Cardiac septum (tissue), 1 donor: ENCODE measurements at regions of chr14 and their contacts with region 1.

Region 1: DNA sequence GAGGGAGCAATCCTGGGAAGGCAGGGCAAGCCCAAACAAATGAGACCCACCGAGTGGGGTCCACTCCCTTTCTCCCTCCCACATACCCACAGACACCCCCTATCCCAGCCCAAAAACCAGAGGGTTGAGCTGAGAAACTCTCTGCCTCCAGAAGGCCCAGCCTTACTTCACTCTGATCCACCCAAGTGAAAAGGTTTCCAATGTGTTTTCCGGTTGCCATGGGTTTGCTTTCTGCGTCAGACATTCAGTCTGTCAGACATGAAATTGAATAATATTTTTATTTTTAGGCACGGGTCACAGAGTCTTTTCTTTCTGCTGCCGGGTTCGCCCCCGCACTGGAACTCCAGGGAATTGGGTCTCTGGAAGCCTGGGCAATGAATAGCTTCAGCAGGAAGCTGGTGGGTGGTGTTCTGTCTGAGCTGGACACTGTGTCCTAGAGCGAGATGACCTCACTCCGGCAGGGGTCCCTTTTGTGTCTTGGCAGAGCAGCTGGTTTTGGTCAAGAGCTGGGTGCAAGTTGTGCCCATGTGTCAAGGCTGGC is 69.8 kb upstream of the CLMN start:
- DNase-seq: peak; percentile 90

Region 2: GRCh38 chr14:95183532-95184412 is 205.8 kb before region 1 on chr14:
- intact Hi-C with region 1: loop called (anchors 5 kb)
- DNase-seq: no peak